ENCODE measurements at regions of chr10 and their contacts with region 1.

Region 1: GRCh38 chr10:96651998-96652431 is 65.2 kb upstream of the TM9SF3 start:
- DNase-seq: peak in 8 of 9 experiments; percentile 21 to 89 (median 58)
- ATAC-seq: peak; percentile 77
- H3K4me3 ChIP-seq: no peak overlapping the region
- H3K4me3 Mint-ChIP-seq: peak overlapping the region; percentile 38
- H3K27ac ChIP-seq: peak overlapping the region in 1 of 2 experiments; percentile 78
- H3K27ac Mint-ChIP-seq: peak overlapping the region; percentile 82
- H3K4me1 ChIP-seq: peaks cover 26% of the 10 kb centered on the region
- H3K4me1 Mint-ChIP-seq: peaks cover 37% of the 10 kb centered on the region
- H3K27me3 ChIP-seq: no peaks in the 10 kb centered on the region
- H3K27me3 Mint-ChIP-seq: no peaks in the 10 kb centered on the region
- CTCF ChIP-seq: no peak

Region 2: DNA sequence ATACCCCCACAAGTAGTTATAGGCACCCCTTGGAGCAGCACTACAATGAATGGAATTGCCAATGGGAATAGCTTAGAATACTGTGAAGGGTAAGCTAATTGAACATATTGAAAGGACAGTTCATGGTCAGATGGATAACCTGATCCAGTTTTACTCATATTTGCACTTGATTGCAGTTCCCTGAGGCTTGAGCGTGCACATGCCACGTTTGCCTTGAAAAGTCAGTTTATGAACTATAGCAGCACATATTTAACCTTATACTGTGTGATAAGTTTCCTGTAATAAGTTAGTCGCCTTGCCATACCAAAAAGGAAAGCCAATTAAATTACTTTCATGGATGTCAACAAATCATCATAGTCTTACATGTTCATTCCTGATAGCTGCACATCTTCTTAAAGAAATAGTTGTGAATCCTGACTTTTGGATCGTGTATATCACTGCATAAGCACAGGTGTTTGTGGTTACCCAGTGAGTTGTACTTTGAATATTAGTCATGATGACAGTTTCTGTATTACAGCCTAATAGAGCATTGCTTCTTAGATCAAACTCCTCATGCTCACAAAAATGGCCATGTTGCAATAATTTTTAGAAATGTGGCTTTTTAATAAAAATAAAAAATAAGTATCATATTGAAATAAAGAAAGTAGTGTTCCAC is 326.2 kb before region 1 on chr10:
- CTCF ChIA-PET with region 1: no interaction called
- POLR2A ChIA-PET with region 1: no interaction called
- intact Hi-C with region 1: no loop called
- DNase-seq: no peak
- ATAC-seq: no peak
- H3K4me3 ChIP-seq: no peak overlapping the region
- H3K4me3 Mint-ChIP-seq: no peak overlapping the region
- H3K27ac ChIP-seq: no peak overlapping the region
- H3K27ac Mint-ChIP-seq: no peak overlapping the region
- H3K4me1 ChIP-seq: no peaks in the 10 kb centered on the region
- H3K4me1 Mint-ChIP-seq: no peaks in the 10 kb centered on the region
- H3K27me3 ChIP-seq: no peaks in the 10 kb centered on the region
- H3K27me3 Mint-ChIP-seq: peaks cover 4% of the 10 kb centered on the region
- CTCF ChIP-seq: no peak

Region 3: DNA sequence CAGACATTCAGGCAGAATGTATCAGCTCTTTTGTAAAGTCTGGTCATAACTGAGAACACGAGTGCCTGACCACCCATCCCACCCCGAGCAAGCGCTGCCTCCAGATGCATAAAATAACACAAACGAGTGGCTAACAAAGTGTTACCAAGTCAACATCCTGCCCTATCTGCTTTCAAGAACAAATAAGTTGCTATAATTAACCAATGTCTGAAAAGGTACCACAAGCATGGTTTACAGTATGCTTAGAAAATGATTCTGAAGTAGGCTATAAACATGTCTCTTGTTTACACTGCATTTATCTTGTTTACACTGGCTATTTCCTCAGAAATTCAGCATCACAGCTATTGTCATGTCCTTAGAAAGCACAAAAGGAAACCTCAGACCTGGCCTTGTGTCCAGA is 18.8 kb after region 1 on chr10:
- CTCF ChIA-PET with region 1: interaction called, 5 read pairs
- POLR2A ChIA-PET with region 1: no interaction called
- intact Hi-C with region 1: loop called in 1 of 2 experiments (anchors 2 kb)
- DNase-seq: peak in 2 of 9 experiments; percentile 56 to 76
- ATAC-seq: peak; percentile 45
- H3K4me3 ChIP-seq: no peak overlapping the region
- H3K4me3 Mint-ChIP-seq: no peak overlapping the region
- H3K27ac ChIP-seq: peak overlapping the region; percentile 31 to 89
- H3K27ac Mint-ChIP-seq: peak overlapping the region; percentile 85
- H3K4me1 ChIP-seq: peaks cover 25% of the 10 kb centered on the region
- H3K4me1 Mint-ChIP-seq: peaks cover 40% of the 10 kb centered on the region
- H3K27me3 ChIP-seq: no peaks in the 10 kb centered on the region
- H3K27me3 Mint-ChIP-seq: no peaks in the 10 kb centered on the region
- CTCF ChIP-seq: no peak

Region 4: GRCh38 chr10:96719850-96720421 is 67.9 kb after region 1 on chr10:
- CTCF ChIA-PET with region 1: interaction called, 3 read pairs
- POLR2A ChIA-PET with region 1: interaction called, 5 read pairs
- intact Hi-C with region 1: loop called in 1 of 2 experiments (anchors 2 kb)
- DNase-seq: peak; percentile 27 to 80 (median 58)
- ATAC-seq: peak; percentile 53
- H3K4me3 ChIP-seq: peak overlapping the region; percentile 53 to 81
- H3K4me3 Mint-ChIP-seq: peak overlapping the region; percentile 95
- H3K27ac ChIP-seq: peak overlapping the region in 1 of 2 experiments; percentile 88
- H3K27ac Mint-ChIP-seq: peak overlapping the region; percentile 88
- H3K4me1 ChIP-seq: peaks cover 7% of the 10 kb centered on the region
- H3K4me1 Mint-ChIP-seq: peaks cover 40% of the 10 kb centered on the region
- H3K27me3 ChIP-seq: no peaks in the 10 kb centered on the region
- H3K27me3 Mint-ChIP-seq: no peaks in the 10 kb centered on the region
- CTCF ChIP-seq: peak; percentile 28

Measured in CD8-positive, alpha-beta T cell (primary cell).